ENCODE measurements at regions of chr9 and their contacts with region 1.

Region 1: DNA sequence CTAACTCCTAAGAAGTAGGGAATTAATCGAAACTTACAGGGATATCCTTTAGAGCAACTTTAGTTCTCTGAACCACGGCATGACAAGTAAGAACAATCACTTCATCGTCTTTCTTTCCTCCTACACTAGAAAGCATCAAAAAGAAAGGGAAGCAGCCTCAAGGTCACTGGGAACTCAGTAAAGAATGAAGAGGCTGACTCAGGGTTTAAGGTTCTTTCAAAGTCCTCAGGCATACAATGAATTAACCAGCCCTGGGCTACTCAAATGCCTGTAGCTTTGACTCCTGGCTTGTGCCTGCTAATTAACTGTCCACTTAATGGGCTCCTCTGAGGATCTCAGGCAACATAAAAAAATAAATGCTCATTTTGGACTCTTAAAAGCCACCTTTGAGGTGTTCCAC is 102.0 kb downstream of the TRIM32 start:
- DNase-seq: no peak

Region 2: GRCh38 chr9:116616304-116616914 is 172.7 kb before region 1 on chr9:
- intact Hi-C with region 1: loop called in 1 of 2 experiments (anchors 5 kb)
- DNase-seq: no peak

Region 3: DNA sequence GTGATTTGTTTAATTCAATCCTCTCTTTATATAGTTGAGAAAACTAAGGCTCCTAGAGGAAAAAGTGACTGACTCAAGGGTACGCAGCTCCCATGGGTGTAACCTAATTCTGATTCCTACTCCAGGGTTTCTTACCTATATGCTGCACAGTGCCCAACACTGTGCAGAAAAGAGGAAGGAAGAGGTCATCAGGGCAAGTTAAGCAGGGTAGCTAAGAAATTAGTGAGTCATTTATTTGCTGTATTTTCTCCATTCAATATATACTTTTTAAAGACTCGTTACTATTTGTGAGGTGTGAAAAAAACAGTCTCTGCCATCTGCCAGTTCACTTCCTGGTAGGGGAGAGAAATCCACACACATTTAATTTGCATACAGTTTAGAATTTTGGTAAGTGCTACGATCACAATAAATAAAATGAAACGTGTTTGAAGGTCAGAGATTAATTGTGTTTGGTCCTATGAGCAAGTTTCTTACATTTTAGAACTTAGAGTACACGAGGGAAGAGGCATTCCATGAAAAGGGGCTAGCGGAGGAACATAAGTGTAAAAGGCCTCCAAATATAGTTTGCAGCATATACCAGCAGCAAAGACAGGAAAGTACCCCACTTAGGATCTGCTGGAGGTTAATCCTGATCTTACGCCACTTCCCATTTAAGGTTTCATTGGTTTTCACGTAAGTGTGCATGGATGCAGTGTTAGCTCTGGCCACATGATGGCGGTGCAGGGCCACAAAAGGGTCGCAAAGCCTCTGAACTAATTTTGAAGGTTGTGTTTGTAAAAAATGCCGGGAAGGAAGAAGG is 855.3 kb after region 1 on chr9:
- intact Hi-C with region 1: no loop called
- DNase-seq: peak; percentile 88

Measured in posterior vena cava (tissue), 2 donors.